Dorsolateral prefrontal cortex (tissue), 120 donors: ENCODE measurements at regions of chr18 and their contacts with region 1.

Region 1: DNA sequence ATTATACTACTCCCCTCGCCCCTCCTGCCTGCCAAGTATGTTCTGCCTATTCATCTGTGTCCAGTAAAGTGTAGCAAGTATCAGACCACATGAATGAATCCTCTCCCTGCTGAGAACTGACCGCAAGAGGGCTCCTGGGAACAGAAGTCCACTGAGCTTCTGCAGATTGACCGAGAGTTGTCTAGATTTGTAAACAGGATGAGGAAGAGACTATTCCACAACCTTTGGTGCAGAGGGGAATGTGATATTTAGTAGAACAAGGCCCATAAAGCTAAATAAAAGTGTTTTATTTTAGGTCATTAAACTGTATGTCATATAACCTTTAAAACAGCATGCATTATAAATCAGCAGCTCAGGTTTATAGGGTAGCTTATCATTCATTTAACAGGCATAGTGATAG is 377.0 kb downstream of the DCC start:
- DNase-seq: peak in 6 of 10 donors; percentile 15 to 66 (median 48)
- H3K4me3 ChIP-seq: no peak overlapping the region
- H3K27ac ChIP-seq: no peak overlapping the region
- H3K27me3 ChIP-seq: no peaks in the 10 kb centered on the region
- CTCF ChIP-seq: peak in 54 of 56 donors; percentile 21 to 74 (median 54)

Region 2: DNA sequence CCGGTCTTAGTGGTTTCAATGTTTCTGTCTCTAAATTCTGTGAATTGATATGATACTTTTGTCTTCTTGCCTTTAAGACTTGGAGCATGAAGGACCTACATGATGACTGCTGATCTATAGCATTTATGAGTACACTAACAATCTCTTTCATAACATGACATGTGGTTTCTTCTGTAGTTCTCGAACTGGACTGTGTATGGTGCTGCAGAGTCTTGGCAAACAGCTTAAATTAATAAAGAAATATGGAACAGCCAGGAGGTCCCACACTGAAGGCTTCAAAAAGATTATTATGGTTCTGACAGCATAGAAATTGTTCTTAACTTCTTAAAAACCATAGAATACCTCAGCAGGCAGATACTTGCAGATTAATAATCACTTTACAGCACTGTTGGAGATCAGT is 232.0 kb before region 1 on chr18:
- intact Hi-C with region 1: no loop called
- DNase-seq: no peak
- H3K4me3 ChIP-seq: no peak overlapping the region
- H3K27ac ChIP-seq: no peak overlapping the region
- H3K27me3 ChIP-seq: no peaks in the 10 kb centered on the region
- CTCF ChIP-seq: no peak

Region 3: GRCh38 chr18:52624702-52625101 is 92.3 kb before region 1 on chr18:
- intact Hi-C with region 1: no loop called
- DNase-seq: no peak
- H3K4me3 ChIP-seq: no peak overlapping the region
- H3K27ac ChIP-seq: no peak overlapping the region
- H3K27me3 ChIP-seq: peaks cover 0 to 3% (median 0%) of the 10 kb centered on the region in 45 donors
- CTCF ChIP-seq: no peak

Region 4: GRCh38 chr18:52903857-52904256 is 186.9 kb after region 1 on chr18:
- intact Hi-C with region 1: loop called in 1 of 2 experiments (anchors 10 kb)
- DNase-seq: peak in 7 of 10 donors; percentile 33 to 74 (median 51)
- H3K4me3 ChIP-seq: no peak overlapping the region
- H3K27ac ChIP-seq: no peak overlapping the region
- H3K27me3 ChIP-seq: no peaks in the 10 kb centered on the region
- CTCF ChIP-seq: peak; percentile 56 to 86 (median 72)

Region 5: DNA sequence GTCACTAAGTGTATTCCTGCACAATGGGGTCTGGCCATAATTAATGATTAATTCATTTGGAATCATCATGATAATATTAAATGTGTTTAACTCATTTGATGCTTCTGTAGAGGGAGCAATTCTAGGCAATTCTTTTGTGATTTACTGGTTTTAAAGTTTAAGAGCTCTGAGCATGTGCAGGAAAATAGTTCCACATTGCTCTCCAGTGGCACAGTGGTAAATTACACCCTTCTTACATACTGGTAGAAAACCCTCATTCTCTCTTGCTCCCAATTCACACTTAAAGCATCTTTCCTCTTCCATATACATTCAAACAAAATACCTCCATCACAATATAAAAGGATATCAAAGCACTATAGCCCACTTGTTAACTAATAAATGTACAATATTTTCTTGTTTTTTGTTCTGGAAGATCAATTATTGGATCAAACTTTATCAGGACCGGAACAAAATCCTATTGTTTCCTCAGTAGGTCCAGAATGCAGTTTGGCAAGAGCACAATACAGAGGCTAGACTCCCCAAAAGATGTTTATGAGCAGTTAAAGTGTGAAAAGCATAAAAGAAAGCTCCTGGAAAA is 663.2 kb after region 1 on chr18:
- intact Hi-C with region 1: loop called in 1 of 2 experiments (anchors 5 kb)
- DNase-seq: no peak
- H3K4me3 ChIP-seq: no peak overlapping the region
- H3K27ac ChIP-seq: no peak overlapping the region
- H3K27me3 ChIP-seq: no peaks in the 10 kb centered on the region
- CTCF ChIP-seq: peak; percentile 45 to 83 (median 70)

Region 6: GRCh38 chr18:54127759-54128378 is 1410.9 kb after region 1 on chr18:
- intact Hi-C with region 1: loop called in 1 of 2 experiments (anchors 5 kb)
- DNase-seq: peak in 7 of 10 donors; percentile 14 to 58 (median 49)
- H3K4me3 ChIP-seq: no peak overlapping the region
- H3K27ac ChIP-seq: no peak overlapping the region
- H3K27me3 ChIP-seq: no peaks in the 10 kb centered on the region
- CTCF ChIP-seq: peak; percentile 34 to 79 (median 67)